ENCODE measurements at regions of chr20 and their contacts with region 1.

Region 1: GRCh38 chr20:13771853-13772453 is 12.8 kb downstream of the ESF1 start:
- DNase-seq: no peak
- ATAC-seq: no peak
- H3K4me3 ChIP-seq: no peak overlapping the region
- H3K27ac ChIP-seq: no peak overlapping the region
- H3K4me1 ChIP-seq: no peaks in the 10 kb centered on the region
- H3K27me3 ChIP-seq: no peaks in the 10 kb centered on the region
- CTCF ChIP-seq: peak; percentile 20 to 42

Region 2: DNA sequence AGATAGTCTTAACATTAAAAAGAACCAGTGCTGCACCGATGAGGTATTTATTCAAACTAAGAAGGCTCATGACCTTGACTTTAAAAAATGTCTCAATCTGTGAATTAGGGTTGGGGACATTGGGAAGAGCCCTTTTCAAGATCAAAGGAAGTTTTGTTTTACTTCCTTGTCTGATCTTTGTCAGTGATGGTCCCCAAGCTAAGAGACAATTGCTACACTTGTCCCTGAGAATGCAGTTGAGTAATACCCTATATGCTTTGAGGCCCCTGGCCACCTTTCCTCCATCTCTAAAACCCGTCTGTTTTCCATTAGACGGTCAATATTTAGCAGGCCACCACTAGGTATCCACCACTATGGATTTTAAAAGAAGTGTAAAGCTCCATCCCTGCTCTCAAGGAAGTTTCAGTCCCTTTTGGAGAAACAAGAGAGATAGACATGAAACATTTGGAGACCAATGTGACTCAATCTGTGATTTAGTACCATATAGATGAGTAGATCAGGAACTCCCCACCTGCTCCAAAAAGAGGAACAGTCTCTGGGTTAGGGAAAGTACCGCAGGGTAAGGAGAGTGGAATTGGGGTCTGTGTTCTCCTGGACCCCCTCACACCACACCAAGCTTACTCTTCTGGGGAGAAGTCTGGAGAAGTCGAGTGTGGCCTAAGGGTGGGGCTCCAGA is 650.0 kb before region 1 on chr20:
- intact Hi-C with region 1: loop called in 1 of 2 experiments (anchors 10 kb)
- DNase-seq: no peak
- ATAC-seq: no peak
- H3K4me3 ChIP-seq: no peak overlapping the region
- H3K27ac ChIP-seq: no peak overlapping the region
- H3K4me1 ChIP-seq: no peaks in the 10 kb centered on the region
- H3K27me3 ChIP-seq: no peaks in the 10 kb centered on the region
- CTCF ChIP-seq: no peak

Region 3: DNA sequence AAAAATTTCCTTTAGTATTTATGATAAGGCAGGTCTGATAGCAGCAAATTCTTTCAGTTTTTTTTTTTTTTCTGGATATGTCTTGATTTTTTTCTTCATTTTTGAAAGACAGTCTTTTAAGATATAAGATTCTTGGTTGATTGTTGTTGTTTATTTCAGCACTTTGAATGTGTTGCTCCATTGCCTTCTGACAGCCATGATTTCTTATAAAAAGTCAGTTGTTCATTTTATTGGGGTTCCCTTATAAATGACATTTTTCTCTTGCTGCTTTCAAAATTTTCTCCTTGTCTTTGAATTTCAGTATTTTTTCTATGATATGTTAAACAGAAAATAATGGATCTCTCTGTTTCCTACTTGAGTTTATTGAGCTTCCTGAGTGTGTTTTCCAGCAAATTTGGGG is 398.6 kb before region 1 on chr20:
- intact Hi-C with region 1: no loop called
- DNase-seq: no peak
- ATAC-seq: no peak
- H3K4me3 ChIP-seq: no peak overlapping the region
- H3K27ac ChIP-seq: no peak overlapping the region
- H3K4me1 ChIP-seq: no peaks in the 10 kb centered on the region
- H3K27me3 ChIP-seq: no peaks in the 10 kb centered on the region
- CTCF ChIP-seq: no peak

Region 4: GRCh38 chr20:13819885-13820645 is 48.1 kb after region 1 on chr20:
- intact Hi-C with region 1: no loop called
- DNase-seq: peak in 2 of 4 donors; percentile 10 to 40
- ATAC-seq: peak; percentile 83
- H3K4me3 ChIP-seq: no peak overlapping the region
- H3K27ac ChIP-seq: no peak overlapping the region
- H3K4me1 ChIP-seq: peaks cover 0 to 7% of the 10 kb centered on the region in 2 donors
- H3K27me3 ChIP-seq: no peaks in the 10 kb centered on the region
- CTCF ChIP-seq: peak; percentile 37 to 73

Measured in left lung (tissue), 14 donors.